Left lung (tissue), 14 donors: ENCODE measurements at regions of chr20 and their contacts with region 1.

Region 1: GRCh38 chr20:8389381-8390036 is 257.4 kb downstream of the PLCB1 start:
- DNase-seq: peak in 2 of 4 donors; percentile 43 to 61
- ATAC-seq: peak; percentile 70
- H3K4me3 ChIP-seq: no peak overlapping the region
- H3K27ac ChIP-seq: no peak overlapping the region
- H3K4me1 ChIP-seq: peaks cover 0 to 32% of the 10 kb centered on the region in 2 donors
- H3K27me3 ChIP-seq: no peaks in the 10 kb centered on the region
- CTCF ChIP-seq: peak in 1 of 2 donors; percentile 35

Region 2: DNA sequence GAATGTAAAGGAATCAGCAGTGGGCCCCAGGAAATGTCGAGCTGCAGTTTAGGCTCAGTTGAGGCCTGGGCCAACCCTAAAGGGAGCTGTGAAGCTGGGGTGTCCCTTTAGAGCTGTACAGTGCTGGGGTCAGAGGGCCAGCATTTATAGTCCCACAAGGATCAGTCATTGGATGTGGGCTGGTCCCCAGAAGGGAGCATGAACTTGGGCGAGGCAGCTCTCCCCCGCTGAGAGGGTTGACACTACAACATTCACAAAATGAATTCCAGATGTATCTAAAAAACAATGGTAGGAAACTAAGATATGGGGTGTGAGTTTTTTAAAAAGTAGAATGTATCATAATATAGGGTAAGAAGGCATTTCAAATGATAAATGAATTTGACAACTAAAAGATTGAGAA is 340.2 kb before region 1 on chr20:
- intact Hi-C with region 1: loop called in 1 of 2 experiments (anchors 5 kb)
- DNase-seq: no peak
- ATAC-seq: no peak
- H3K4me3 ChIP-seq: no peak overlapping the region
- H3K27ac ChIP-seq: no peak overlapping the region
- H3K4me1 ChIP-seq: no peaks in the 10 kb centered on the region
- H3K27me3 ChIP-seq: no peaks in the 10 kb centered on the region
- CTCF ChIP-seq: no peak

Region 3: GRCh38 chr20:8131598-8132483 is 257.7 kb before region 1 on chr20 and contains the start of gene PLCB1:
- intact Hi-C with region 1: loop called in 1 of 2 experiments (anchors 10 kb)
- DNase-seq: peak; percentile 81 to 94 (median 86)
- ATAC-seq: peak; percentile 99
- H3K4me3 ChIP-seq: peak within 1 kb of the TSS; percentile 60 to 62
- H3K27ac ChIP-seq: peak within 1 kb of the TSS; percentile 44 to 69
- H3K4me1 ChIP-seq: peaks cover 0 to 37% of the 10 kb centered on the region in 2 donors
- H3K27me3 ChIP-seq: peaks cover 14 to 30% of the 10 kb centered on the region in 2 donors
- CTCF ChIP-seq: peak; percentile 78 to 83
- polyA plus RNA-seq, gene PLCB1: 18.5 to 27.7 (median 19.3) TPM